Astrocyte of the cerebellum (primary cell): ENCODE measurements at regions of chr13 and their contacts with region 1.

Region 1: GRCh38 chr13:112053744-112054615 is 13.0 kb upstream of the SOX1 start:
- DNase-seq: no peak
- H3K4me3 ChIP-seq: no peak overlapping the region
- CTCF ChIP-seq: no peak

Region 2: DNA sequence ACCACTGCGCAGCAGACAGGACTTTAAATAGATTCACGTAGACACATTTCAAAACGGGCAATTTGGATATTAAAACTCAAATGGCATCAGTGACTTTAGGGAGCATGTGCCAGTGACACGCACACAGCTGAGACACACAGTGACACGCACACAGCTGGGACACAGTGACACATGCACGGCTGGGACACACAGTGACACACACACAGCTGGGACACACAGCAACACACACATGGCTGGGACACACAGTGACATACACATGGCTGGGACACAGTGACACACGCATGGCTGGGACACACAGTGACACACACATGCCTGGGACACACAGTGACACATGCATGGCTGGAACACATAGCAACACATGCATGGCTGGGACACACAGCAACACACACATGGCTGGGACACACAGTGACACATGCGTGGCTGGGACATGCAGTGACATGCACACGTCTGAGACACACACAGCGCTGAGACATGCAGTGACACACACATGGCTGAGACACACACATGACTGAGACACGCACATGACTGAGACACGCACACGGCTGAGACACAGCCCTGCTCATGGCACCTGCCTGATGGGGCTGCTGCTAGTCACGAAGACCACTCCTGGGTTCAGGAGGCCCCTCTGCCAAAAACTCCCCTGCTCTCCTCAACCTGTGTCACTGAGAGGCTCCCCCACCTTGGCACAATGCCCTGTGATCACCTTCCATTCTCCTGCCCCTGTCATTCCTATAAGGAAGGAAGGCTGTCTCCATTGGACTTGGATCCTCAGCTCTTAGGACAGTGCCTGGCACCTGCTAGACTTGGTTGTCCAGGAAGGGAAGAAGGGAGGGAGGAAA is 65.4 kb after region 1 on chr13:
- in situ Hi-C with region 1: loop called (anchors 5 kb)
- DNase-seq: no peak
- H3K4me3 ChIP-seq: no peak overlapping the region
- CTCF ChIP-seq: no peak